CD4-positive, alpha-beta memory T cell (primary cell): ENCODE measurements at regions of chr2 and their contacts with region 1.

Region 1: DNA sequence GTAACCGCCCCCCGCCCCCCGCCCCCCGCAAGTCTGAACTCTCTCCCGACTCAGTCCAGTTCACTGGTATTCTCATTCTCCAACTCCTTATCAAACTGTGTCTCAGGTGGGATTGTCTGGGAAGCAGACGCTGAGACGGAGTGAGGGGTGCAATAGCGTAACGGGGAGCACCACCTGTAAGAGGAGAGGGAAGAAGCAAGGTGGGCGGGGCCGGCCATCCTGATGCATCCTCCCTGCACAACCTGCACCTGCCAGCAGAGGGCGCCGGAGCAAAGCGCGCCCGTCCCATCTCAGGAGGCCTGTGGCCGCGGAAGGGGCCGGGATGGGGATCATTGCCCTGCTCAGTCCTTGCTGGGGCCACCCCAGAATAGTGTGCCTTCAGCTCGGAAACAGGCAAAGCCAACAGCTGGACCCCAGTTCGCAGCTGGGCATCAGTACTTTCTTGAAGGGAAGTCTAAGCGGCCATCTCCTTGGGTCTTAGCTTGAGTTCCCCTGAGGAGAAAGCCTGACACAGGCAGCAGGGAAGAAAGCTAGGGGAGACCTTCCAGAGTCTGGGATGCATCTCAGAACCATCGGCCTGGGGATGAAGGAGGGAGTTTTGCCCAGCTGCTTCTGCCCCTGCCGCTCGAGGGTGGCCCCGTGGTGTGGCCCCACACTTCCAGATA is 208.0 kb downstream of the TFCP2L1 start:
- DNase-seq: peak in 4 of 5 donors; percentile 30 to 40 (median 36)
- H3K4me3 ChIP-seq: no peak overlapping the region
- H3K4me3 Mint-ChIP-seq: no peak overlapping the region
- H3K27ac ChIP-seq: no peak overlapping the region
- H3K27ac Mint-ChIP-seq: no peak overlapping the region
- H3K4me1 ChIP-seq: no peaks in the 10 kb centered on the region
- H3K4me1 Mint-ChIP-seq: peaks cover 0 to 7% (median 0%) of the 10 kb centered on the region in 4 donors
- H3K27me3 ChIP-seq: no peaks in the 10 kb centered on the region
- H3K27me3 Mint-ChIP-seq: peaks cover 10 to 16% of the 10 kb centered on the region in 2 donors

Region 2: GRCh38 chr2:121058852-121059558 is 18.0 kb before region 1 on chr2:
- CTCF ChIA-PET with region 1: interaction called, 11 read pairs
- POLR2A ChIA-PET with region 1: no interaction called
- intact Hi-C with region 1: no loop called
- DNase-seq: no peak
- H3K4me3 ChIP-seq: no peak overlapping the region
- H3K4me3 Mint-ChIP-seq: no peak overlapping the region
- H3K27ac ChIP-seq: no peak overlapping the region
- H3K27ac Mint-ChIP-seq: no peak overlapping the region
- H3K4me1 ChIP-seq: no peaks in the 10 kb centered on the region
- H3K4me1 Mint-ChIP-seq: no peaks in the 10 kb centered on the region
- H3K27me3 ChIP-seq: no peaks in the 10 kb centered on the region
- H3K27me3 Mint-ChIP-seq: peaks cover 0 to 6% of the 10 kb centered on the region in 2 donors

Region 3: GRCh38 chr2:121088251-121089165 is 11.5 kb after region 1 on chr2:
- CTCF ChIA-PET with region 1: interaction called, 34 read pairs
- POLR2A ChIA-PET with region 1: no interaction called
- intact Hi-C with region 1: no loop called
- DNase-seq: no peak
- H3K4me3 ChIP-seq: no peak overlapping the region
- H3K4me3 Mint-ChIP-seq: no peak overlapping the region
- H3K27ac ChIP-seq: no peak overlapping the region
- H3K27ac Mint-ChIP-seq: no peak overlapping the region
- H3K4me1 ChIP-seq: no peaks in the 10 kb centered on the region
- H3K4me1 Mint-ChIP-seq: no peaks in the 10 kb centered on the region
- H3K27me3 ChIP-seq: no peaks in the 10 kb centered on the region
- H3K27me3 Mint-ChIP-seq: peaks cover 2 to 4% of the 10 kb centered on the region in 2 donors

Region 4: DNA sequence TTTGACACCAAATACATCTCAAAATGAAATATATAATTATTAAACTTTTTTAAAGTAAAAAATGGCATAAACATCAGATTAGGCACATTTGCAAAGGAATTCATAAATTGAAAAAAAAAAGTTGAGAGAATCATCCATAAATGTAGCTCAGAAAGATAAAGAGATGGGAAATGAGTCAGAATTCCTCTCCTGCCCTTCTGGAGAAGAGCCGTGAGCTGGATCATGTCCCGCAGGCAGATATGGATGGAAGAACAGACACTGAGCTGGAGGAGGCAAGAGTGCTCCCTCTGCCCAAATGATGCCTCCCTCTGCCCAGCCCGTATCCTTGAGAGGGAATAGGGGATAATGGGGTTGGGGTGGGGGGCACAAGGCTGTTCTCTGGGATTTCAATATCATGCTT is 17.1 kb after region 1 on chr2:
- CTCF ChIA-PET with region 1: interaction called, 34 read pairs
- POLR2A ChIA-PET with region 1: no interaction called
- intact Hi-C with region 1: no loop called
- DNase-seq: no peak
- H3K4me3 ChIP-seq: no peak overlapping the region
- H3K4me3 Mint-ChIP-seq: no peak overlapping the region
- H3K27ac ChIP-seq: no peak overlapping the region
- H3K27ac Mint-ChIP-seq: no peak overlapping the region
- H3K4me1 ChIP-seq: no peaks in the 10 kb centered on the region
- H3K4me1 Mint-ChIP-seq: peaks cover 0 to 4% (median 0%) of the 10 kb centered on the region in 4 donors
- H3K27me3 ChIP-seq: no peaks in the 10 kb centered on the region
- H3K27me3 Mint-ChIP-seq: peaks cover 6 to 11% of the 10 kb centered on the region in 2 donors